ENCODE measurements at regions of chr19 and their contacts with region 1.

Region 1: GRCh38 chr19:39435499-39436349 is at the start of gene RPS16:
- H3K4me3 ChIP-seq: peak within 1 kb of the TSS; percentile 79
- H3K27ac ChIP-seq: peak within 1 kb of the TSS; percentile 100
- H3K4me1 ChIP-seq: peaks cover 29% of the 10 kb centered on the region
- CTCF ChIP-seq: peak; percentile 70; the same call in 1 of the 2 replicates

Region 2: DNA sequence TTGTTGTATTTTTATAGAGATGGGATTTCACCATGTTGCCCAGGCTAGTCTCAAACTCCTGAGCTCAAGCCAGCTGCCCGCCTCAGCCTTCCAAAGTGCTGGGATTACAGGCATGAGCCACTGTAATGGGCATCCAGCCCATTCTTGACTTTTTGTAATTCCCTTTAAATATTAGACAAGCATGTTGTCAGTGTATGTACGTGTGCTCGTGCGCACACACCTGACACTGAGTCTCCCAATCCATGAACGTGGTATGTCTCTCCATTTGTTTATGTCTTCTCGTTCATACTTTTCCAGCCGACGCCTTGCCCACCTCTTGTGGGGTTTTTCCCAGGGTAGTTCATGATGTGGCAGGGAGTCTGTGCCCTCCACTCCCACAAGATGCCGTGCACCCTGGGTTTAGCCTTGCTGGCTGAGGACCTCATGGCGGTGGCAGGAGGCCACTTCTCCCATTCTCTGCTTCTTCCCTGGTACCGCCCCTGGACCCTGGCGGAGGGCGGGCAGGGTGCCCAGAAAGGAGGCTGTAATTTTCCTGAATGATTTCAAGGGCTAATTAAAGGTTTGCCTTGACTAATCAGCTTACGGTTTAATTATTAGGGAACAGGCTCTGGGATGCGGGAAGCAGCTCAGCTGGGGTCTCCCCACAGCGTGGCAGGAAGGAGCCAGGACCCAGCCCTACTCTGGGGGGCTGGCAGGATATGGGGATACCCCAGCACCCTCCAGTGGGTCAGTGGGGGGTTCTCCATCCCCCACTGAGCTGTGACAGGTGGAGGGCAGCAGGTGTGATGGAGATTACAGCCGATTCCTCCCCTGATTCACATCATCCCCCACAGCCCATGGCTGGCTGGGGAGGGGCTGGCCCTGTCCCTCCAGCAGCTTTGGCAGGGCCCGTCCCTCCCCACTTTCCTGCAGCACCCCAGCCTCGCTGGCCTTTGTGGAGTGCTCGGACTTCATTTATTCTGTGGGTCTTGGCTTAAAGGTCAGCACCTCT is 297.2 kb before region 1 on chr19:
- CTCF ChIA-PET with region 1: no interaction called
- POLR2A ChIA-PET with region 1: no interaction called
- H3K4me3 ChIP-seq: no peak overlapping the region
- H3K27ac ChIP-seq: no peak overlapping the region; the same call in 1 of the 2 replicates
- H3K4me1 ChIP-seq: peaks cover 30% of the 10 kb centered on the region
- CTCF ChIP-seq: no peak

Region 3: GRCh38 chr19:39246951-39247669 is 188.6 kb before region 1 on chr19:
- CTCF ChIA-PET with region 1: no interaction called
- POLR2A ChIA-PET with region 1: no interaction called
- H3K4me3 ChIP-seq: no peak overlapping the region
- H3K27ac ChIP-seq: no peak overlapping the region
- H3K4me1 ChIP-seq: no peaks in the 10 kb centered on the region
- CTCF ChIP-seq: no peak

Region 4: DNA sequence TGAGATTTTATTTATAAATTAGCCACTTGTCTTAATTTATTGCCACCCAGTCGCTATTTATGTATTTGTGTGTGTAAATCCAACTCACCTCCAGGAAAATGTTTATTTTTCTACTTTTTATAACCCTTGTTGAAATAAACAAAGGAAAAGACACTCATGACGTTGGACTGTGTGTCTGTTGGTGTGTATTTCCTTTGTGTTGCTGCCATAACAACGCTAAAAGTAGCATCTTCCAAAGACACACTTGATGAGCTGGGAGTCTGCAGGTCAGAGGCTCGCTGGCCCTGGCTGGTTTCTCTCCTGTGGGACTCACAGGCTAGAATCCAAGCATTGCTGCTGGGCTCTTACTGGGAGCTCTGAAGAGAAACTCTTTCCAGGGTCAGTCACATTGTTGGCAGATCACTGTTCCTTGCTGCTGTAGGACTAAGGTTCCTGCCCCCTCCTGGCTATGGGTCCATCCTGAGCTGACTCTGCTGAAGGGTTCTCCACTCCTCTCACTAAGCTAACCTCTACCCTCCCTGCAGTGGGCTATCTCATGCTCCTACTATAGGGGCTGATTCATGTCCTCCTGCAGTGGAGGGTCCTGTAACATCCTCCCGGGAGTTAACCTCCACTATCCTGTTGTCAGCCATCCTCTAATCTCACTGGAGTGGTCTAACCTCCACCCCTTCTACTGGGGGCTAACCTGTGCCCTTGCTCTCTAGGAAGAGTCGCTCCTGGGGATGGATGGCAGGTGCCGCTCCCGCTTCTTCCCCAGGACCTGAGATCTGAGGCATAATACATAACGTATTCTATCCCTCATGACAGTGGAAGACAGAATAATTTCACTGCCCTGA is 165.5 kb before region 1 on chr19:
- CTCF ChIA-PET with region 1: no interaction called
- POLR2A ChIA-PET with region 1: no interaction called
- H3K4me3 ChIP-seq: no peak overlapping the region
- H3K27ac ChIP-seq: no peak overlapping the region
- H3K4me1 ChIP-seq: peaks cover 5% of the 10 kb centered on the region
- CTCF ChIP-seq: no peak

Region 5: DNA sequence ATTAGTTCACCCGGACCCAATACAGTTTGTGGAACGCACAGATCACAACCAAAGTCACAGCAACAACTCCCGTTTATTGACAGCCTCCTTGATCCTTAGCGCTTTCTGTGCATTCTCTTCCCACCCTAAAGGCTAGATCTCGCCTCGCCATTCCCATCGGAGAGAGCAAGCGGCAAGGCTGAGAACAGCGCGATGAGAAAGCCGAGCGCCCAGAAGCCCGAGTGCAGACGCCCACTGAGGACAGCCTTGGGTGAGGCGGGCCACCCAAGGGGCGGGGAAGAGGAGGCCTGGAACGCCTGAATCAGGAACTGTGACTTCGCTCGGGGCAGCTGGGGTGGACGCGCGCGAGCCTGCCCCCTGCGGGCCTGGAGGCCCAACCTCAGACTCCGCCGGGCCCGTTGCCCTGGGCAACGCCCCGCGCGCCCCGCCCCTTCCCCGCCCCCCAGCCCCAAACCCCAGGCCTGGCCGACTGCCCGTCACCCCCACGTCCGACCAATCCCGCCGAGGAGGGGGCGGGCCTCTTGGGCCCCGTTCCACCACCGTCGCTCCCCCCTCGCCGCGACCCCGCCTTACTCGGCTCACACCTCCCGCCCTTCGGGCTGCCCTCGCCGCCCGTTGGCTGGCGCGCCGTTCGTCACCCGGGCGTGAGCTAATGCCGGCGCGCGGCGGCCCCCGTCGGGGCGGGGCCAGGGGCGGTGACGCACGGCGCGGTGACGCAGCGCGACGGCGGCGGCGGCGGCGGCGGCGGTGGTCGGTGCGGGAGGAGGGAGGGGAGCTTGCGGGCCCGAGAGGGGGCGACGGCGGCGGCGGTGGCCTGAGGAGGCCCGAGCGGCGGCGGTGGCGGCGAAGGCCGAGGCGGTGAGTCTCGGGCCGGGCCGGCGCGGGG is 93.8 kb before region 1 on chr19 and contains the start of gene SAMD4B:
- CTCF ChIA-PET with region 1: interaction called, 5 read pairs
- POLR2A ChIA-PET with region 1: interaction called, 26 read pairs
- H3K4me3 ChIP-seq: peak within 1 kb of the TSS; percentile 67
- H3K27ac ChIP-seq: peak within 1 kb of the TSS; percentile 90
- H3K4me1 ChIP-seq: peaks cover 40% of the 10 kb centered on the region
- CTCF ChIP-seq: peak; percentile 98

Region 6: GRCh38 chr19:39412100-39412866 is 23.4 kb before region 1 on chr19 and contains the start of gene PLEKHG2:
- CTCF ChIA-PET with region 1: interaction called, 13 read pairs
- POLR2A ChIA-PET with region 1: interaction called, 255 read pairs
- H3K4me3 ChIP-seq: peak within 1 kb of the TSS; percentile 69
- H3K27ac ChIP-seq: peak within 1 kb of the TSS; percentile 91
- H3K4me1 ChIP-seq: peaks cover 38% of the 10 kb centered on the region
- CTCF ChIP-seq: peak; percentile 99

Region 7: DNA sequence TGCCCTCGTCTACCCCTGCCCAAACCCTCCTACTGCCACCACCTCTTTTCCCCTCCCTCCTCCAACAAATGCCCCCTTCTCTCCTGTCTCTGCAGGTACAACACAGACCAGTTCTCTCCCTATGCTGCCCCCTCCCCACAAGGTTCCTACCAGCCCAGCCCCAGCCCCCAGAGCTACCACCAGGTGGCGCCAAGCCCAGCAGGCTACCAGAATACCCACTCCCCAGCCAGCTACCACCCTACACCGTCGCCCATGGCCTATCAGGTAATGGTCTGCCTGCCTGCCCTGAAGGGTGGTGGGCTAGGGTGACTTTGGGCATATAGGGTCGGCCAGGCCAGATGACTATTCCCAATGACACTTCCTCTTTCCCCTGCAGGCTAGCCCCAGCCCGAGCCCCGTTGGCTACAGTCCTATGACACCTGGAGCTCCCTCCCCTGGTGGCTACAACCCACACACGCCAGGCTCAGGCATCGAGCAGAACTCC is 38.5 kb after region 1 on chr19:
- CTCF ChIA-PET with region 1: interaction called, 16 read pairs
- POLR2A ChIA-PET with region 1: interaction called, 29 read pairs
- H3K4me3 ChIP-seq: no peak overlapping the region
- H3K27ac ChIP-seq: no peak overlapping the region
- H3K4me1 ChIP-seq: no peaks in the 10 kb centered on the region
- CTCF ChIP-seq: peak; percentile 99

Region 8: DNA sequence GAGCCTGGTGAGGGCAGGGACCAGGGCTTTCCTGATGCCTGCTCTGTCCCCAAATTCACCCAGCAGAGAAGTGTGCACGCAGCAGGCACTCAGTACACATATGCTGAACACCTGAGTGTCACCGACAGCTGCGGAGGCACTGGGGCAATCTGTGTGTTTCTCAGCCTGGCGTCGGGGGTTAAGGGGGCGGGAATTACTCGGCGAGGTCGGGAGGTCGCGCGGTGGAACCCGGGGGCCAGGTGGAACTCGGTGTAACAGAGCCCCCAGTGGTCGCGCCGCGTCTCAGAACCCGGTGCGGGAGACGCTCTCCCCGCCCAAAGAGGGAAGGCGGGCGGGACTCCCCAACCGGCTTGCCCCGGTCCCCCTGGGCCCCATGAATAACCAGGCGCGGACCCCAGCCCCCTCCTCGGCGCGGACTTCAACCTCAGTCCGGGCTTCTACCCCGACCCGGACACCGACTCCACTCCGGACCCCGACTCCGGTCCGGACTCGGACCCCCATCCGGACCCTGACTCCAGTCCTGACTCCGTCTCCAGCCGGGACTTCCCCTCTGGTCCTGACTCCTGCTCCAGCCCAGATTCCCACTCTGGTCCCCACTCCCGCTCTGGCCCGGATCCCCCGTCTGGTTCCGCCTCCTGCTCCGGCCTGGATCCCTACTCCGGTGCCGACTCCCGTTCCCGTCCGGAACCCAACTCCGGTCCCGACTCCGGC is 79.3 kb after region 1 on chr19 and contains the start of gene SELENOV:
- CTCF ChIA-PET with region 1: interaction called, 10 read pairs
- POLR2A ChIA-PET with region 1: interaction called, 18 read pairs
- H3K4me3 ChIP-seq: peak within 1 kb of the TSS; percentile 25
- H3K27ac ChIP-seq: peak within 1 kb of the TSS; percentile 16; the same call in 1 of the 2 replicates
- H3K4me1 ChIP-seq: peaks cover 17% of the 10 kb centered on the region
- CTCF ChIP-seq: peak; percentile 79

Region 9: DNA sequence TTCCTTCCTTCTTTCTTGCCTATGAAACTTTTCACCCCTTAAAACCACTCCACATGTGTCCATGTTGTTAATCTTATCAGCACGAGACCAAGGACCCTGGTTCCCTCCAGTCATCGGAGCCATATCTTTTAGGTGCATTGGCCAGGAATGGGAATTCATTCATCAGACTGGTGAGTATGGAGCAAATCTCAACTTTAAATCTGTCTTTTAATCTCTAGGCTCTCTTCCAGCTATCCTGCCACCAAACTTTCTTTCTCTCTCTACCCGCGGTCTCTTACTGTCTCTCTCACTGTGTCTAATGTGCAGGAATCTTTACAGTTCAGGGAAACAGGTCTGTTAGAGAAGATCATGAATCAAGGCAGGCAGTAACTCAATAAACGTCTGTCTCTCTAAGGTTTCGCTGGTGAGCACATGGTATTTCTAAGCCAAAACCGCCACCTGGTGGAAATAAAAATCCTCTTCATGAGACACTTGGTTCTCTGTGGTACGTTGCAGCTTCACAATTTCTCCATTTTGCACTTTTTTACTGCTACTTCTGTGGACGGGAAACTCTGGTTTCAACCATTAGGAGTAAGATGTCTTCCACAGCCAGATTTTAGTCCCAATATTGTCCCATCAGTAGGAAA is 236.1 kb after region 1 on chr19:
- CTCF ChIA-PET with region 1: interaction called, 44 read pairs
- POLR2A ChIA-PET with region 1: interaction called, 3 read pairs
- H3K4me3 ChIP-seq: no peak overlapping the region
- H3K27ac ChIP-seq: no peak overlapping the region
- H3K4me1 ChIP-seq: no peaks in the 10 kb centered on the region
- CTCF ChIP-seq: peak; percentile 94

Region 10: GRCh38 chr19:39870171-39870590 is 434.5 kb after region 1 on chr19:
- CTCF ChIA-PET with region 1: no interaction called
- POLR2A ChIA-PET with region 1: no interaction called
- H3K4me3 ChIP-seq: no peak overlapping the region
- H3K27ac ChIP-seq: no peak overlapping the region
- H3K4me1 ChIP-seq: peaks cover 6% of the 10 kb centered on the region
- CTCF ChIP-seq: no peak